PC-9 (cell line): ENCODE measurements at regions of chr1 and their contacts with region 1.

Region 1: DNA sequence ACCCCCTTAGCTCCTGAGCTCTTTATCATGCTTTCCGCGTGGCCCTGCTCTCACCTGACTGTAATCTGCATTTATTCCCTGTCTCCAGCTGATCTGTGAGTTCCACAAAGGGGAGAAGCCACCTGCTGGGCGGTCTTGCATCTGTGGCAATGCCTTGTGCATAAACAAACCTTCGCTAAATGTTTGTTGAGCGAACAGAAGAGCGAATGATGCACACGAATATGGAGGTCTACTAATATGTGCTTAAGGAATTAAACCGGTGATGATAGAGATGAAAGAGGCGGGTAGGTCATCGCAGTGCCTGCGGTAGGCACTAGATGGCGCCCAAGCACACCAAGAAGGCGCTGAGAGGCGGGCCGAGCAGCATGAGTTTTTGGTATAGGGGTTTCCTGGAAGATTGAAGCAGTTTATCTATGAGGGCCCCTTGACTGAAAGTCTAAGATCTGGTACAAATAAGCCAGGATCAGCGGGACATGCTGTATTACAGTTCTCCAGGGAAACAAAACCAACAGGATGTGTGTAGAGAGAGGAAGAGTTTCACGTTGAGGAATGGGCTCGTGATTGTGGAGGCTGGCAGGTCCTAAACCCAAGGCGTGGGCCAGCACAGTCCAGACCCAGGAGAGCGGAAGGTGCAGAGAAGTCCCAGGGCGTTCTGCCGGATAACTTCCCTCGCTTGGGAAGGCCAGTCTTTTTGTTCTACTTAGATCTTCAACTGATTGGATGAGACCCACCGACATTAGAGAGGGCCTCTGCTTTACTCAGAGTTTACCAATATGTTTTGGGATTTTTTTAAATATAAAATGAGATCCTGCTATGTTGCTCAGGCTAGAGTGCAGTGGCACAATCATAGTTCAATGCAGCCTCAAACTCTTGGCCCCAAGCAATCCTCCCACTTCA is 34.7 kb downstream of the TOMM20 start:
- DNase-seq: peak; percentile 50 to 79
- H3K4me3 ChIP-seq: no peak overlapping the region
- H3K27ac ChIP-seq: no peak overlapping the region
- H3K4me1 ChIP-seq: no peaks in the 10 kb centered on the region
- H3K27me3 ChIP-seq: no peaks in the 10 kb centered on the region
- CTCF ChIP-seq: peak; percentile 88

Region 2: GRCh38 chr1:233364695-233365539 is 1729.0 kb before region 1 on chr1:
- CTCF ChIA-PET with region 1: no interaction called
- POLR2A ChIA-PET with region 1: no interaction called
- intact Hi-C with region 1: no loop called
- DNase-seq: peak in 1 of 2 experiments; percentile 36
- H3K4me3 ChIP-seq: no peak overlapping the region
- H3K27ac ChIP-seq: no peak overlapping the region
- H3K4me1 ChIP-seq: peaks cover 26% of the 10 kb centered on the region
- H3K27me3 ChIP-seq: no peaks in the 10 kb centered on the region
- CTCF ChIP-seq: peak; percentile 85

Region 3: GRCh38 chr1:234373064-234373958 is 720.6 kb before region 1 on chr1 and contains the start of gene COA6:
- CTCF ChIA-PET with region 1: no interaction called
- POLR2A ChIA-PET with region 1: no interaction called
- intact Hi-C with region 1: loop called (anchors 10 kb)
- DNase-seq: peak; percentile 90 to 92
- H3K4me3 ChIP-seq: peak within 1 kb of the TSS; percentile 98
- H3K27ac ChIP-seq: peak within 1 kb of the TSS; percentile 99
- H3K4me1 ChIP-seq: peaks cover 46% of the 10 kb centered on the region
- H3K27me3 ChIP-seq: no peaks in the 10 kb centered on the region
- CTCF ChIP-seq: no peak
- total RNA-seq, gene COA6: 73.8 and 77.1 TPM in 2 replicates

Region 4: DNA sequence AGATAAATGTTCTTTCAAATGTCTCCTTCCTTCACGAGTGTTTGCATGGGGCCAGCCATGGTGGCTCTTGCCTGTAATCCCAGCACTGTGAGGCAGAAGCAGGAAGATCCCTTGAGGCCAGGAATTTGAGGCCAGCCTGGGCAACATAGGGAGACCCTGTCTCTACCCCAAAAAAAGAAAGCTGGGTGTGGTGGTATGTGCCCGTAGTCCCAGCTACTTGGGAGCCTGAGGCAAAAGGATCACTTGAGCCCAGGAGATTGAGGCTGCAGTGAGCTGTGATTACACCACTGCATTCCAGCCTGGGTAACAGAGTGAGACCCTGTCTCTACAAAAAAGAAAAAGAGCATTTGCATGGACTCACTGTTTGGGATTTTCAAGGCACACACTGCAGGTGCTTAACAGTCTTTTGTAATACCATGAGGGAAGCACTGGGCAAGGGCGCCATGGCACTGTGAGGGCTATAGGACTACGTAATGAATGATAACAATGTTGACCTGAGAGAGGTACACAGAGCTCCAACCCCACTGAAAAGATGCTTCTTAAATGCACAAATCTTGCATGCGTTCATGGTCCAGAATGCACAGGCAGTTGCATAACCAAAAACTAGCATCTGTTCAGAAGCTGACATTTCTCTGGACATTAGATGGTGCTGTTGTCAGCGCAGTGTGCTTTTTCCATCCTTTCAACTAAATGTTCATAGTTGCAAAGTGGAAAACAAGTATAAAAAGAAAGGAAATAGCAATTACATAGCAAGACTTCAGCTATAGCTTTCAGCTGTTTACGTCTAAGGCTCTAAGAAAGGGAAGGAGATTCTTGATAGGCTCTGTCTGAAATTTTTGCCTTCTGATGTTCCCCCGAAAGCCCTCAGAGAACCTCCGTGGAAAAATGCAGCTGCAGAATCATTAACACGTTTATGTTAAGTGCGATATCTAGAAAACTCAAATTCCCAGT is 607.2 kb before region 1 on chr1:
- CTCF ChIA-PET with region 1: interaction called, 11 read pairs
- POLR2A ChIA-PET with region 1: no interaction called
- intact Hi-C with region 1: no loop called
- DNase-seq: peak; percentile 49 to 73
- H3K4me3 ChIP-seq: no peak overlapping the region
- H3K27ac ChIP-seq: 0 out of 2 replicates have a peak overlapping the region, but pooled peaks have one; percentile 26
- H3K4me1 ChIP-seq: peaks cover 35% of the 10 kb centered on the region
- H3K27me3 ChIP-seq: no peaks in the 10 kb centered on the region
- CTCF ChIP-seq: peak; percentile 71

Region 5: GRCh38 chr1:235105051-235106043 is 11.4 kb after region 1 on chr1:
- CTCF ChIA-PET with region 1: interaction called, 10 read pairs
- POLR2A ChIA-PET with region 1: no interaction called
- intact Hi-C with region 1: no loop called
- DNase-seq: no peak
- H3K4me3 ChIP-seq: no peak overlapping the region
- H3K27ac ChIP-seq: no peak overlapping the region
- H3K4me1 ChIP-seq: no peaks in the 10 kb centered on the region
- H3K27me3 ChIP-seq: no peaks in the 10 kb centered on the region
- CTCF ChIP-seq: no peak